Activated CD8-positive, alpha-beta T cell treated with anti-CD3 and anti-CD28 coated beads for 36 hours (primary cell): ENCODE measurements at regions of chr1 and their contacts with region 1.

Region 1: DNA sequence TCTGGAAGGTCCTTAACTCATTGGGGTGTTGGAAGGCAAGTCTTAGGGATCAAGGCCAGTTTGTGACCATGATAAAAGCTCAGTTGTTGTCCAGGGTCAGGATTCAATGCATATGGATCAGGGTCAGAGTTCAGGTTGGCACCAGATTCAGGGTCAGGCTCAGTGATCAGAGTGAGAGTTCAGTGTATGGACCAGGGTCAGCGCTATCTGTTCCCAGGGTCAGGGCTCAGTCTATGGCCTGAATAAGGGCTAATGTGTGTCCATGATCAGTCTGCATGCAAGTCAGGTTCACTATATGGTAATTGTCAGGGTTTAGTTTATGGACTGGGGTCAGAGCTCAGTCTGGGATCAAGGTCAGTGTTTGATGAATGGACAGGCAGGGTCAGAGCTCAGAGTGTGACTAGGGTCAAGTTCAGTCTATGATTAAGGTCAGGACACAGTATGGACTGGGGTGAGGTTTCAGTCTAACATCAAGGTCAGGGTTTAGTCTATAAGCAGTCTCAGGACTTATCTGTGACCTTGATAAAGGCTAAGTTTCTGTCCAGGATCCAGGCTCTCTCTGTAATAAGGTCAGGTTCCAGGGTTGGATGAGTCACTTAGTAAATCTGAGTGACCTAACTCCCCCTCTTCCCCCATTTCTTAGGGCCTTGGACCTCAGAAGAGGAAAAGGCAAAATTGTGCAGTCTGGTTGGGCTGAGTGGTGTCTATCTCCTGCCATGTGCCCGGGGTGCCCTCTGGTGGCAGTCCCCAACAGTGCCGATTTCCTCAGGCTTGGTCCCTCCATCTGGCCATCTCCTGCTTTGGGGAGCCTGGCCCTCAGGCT is 23.8 kb downstream of the KNCN start:
- DNase-seq: peak; percentile 91
- ATAC-seq: peak; percentile 61
- H3K4me3 Mint-ChIP-seq: no peak overlapping the region
- H3K27ac Mint-ChIP-seq: no peak overlapping the region
- H3K4me1 Mint-ChIP-seq: peaks cover 29% of the 10 kb centered on the region
- H3K27me3 Mint-ChIP-seq: peaks cover 37% of the 10 kb centered on the region
- CTCF ChIP-seq: peak; percentile 92

Region 2: DNA sequence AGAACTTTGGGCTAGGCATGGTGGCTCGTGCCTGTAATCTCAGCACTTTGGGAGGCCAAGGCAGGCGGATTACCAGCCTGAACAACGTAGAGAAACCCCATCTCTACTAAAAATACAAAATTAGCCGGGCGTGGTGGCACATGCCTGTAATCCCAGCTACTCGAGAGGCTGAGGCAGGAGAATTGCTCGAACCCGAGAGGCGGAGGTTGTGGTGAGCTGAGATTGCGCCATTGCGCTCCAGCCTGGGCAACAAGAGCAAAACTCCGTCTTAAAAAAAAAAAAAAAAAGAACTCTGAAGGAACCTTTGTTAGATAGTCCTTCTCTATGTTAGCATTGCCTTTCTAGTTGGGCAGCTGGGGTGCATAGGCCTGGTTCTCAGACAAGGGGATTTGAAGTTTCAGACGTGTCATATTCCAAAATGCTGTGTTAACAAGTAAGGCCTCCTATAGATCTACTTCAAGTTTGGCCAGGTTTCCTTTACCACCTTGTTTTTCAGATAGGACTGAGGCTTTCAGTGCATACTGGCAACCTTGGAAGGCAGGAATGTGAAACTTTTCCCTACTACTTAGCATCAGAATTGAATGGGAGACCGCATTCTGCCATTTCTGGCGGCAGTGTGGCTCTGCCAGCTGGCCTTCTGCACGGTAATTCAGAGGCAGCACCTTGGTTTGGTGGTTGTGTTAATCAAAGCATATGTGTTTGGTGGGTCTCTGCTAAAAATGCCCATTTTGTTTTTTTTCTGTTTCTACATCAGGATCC is 218.1 kb before region 1 on chr1:
- CTCF ChIA-PET with region 1: no interaction called
- POLR2A ChIA-PET with region 1: no interaction called
- intact Hi-C with region 1: no loop called
- DNase-seq: no peak
- ATAC-seq: no peak
- H3K4me3 Mint-ChIP-seq: no peak overlapping the region
- H3K27ac Mint-ChIP-seq: no peak overlapping the region
- H3K4me1 Mint-ChIP-seq: peaks cover 28% of the 10 kb centered on the region
- H3K27me3 Mint-ChIP-seq: no peaks in the 10 kb centered on the region
- CTCF ChIP-seq: no peak

Region 3: DNA sequence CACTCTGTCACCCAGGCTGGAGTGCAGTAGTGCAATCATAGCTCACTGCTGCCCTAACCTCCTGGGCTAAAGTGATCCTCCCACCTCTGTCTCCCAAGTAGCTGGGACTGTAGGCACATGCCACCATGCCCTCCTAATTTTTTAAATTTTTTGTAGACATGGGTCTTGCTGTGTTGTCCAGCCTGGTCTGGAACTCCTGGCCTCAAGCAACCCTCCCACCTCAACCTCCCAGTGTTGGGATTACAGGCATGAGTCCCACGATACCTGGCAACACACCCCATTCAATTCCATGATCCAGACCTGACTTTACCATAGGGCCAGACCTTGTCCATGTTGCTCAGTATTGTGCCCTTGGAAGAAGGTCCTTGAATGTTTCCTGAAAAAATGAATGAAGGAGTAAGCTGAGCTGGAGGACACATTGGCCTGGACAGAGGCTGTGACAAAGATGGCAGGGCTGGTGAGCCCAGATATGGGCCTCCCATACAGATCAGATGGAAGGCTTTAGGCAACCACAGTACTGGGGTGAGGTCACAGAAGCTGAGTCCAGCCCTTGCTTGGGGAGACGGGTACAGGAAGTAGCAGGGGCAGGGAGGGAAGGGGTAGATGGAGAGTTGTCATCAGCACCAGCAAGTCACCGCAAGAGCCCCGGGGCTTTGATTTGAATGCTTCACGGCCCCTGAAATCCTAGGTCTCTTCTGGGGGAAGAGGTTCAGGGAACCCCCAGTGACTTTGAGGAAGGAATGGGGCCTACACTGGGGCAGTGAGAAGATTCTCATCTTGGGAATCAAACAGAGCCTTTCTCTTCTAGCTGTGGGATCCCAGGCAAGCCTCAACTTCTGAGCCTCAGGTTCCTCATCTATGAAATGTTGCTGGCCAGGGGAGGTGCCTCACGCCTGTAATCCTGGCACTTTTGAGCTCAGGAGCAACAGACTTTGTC is 78.2 kb before region 1 on chr1:
- CTCF ChIA-PET with region 1: interaction called, 128 read pairs
- POLR2A ChIA-PET with region 1: interaction called, 4 read pairs
- intact Hi-C with region 1: loop called (anchors 2 kb)
- DNase-seq: peak; percentile 11
- ATAC-seq: no peak
- H3K4me3 Mint-ChIP-seq: no peak overlapping the region
- H3K27ac Mint-ChIP-seq: no peak overlapping the region
- H3K4me1 Mint-ChIP-seq: peaks cover 9% of the 10 kb centered on the region
- H3K27me3 Mint-ChIP-seq: peaks cover 47% of the 10 kb centered on the region
- CTCF ChIP-seq: no peak

Region 4: GRCh38 chr1:46489638-46490405 is 37.9 kb before region 1 on chr1 and contains the start of gene DMBX1:
- CTCF ChIA-PET with region 1: interaction called, 22 read pairs
- POLR2A ChIA-PET with region 1: no interaction called
- intact Hi-C with region 1: no loop called
- DNase-seq: peak; percentile 51
- ATAC-seq: peak; percentile 59
- H3K4me3 Mint-ChIP-seq: peak within 1 kb of the TSS; percentile 48
- H3K27ac Mint-ChIP-seq: no peak within 1 kb of the TSS
- H3K4me1 Mint-ChIP-seq: peaks cover 35% of the 10 kb centered on the region
- H3K27me3 Mint-ChIP-seq: peaks cover 83% of the 10 kb centered on the region
- CTCF ChIP-seq: no peak
- total RNA-seq, gene DMBX1: 0.09 TPM in 1 of 2 experiments, not detected in the other

Region 5: DNA sequence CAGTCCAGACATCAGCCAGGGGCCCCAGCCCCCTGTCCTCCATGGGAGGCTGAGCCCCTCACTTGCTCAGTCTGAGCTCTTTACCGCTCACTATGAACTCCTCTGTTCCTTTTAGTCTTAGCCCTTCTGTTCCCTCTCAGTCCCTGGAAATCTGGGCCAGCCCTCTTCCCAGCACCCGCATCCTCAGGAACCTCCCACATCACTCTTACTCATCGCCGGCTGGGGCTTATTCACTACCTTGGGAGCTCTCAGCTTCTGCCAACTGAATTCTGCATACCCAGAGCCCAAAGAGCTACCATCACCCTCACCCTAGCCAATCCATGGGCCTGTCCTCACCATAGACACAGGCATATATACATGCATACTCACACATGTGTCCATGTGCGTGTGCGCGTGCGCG is 12.3 kb after region 1 on chr1:
- CTCF ChIA-PET with region 1: interaction called, 14 read pairs
- POLR2A ChIA-PET with region 1: no interaction called
- intact Hi-C with region 1: no loop called
- DNase-seq: no peak
- ATAC-seq: no peak
- H3K4me3 Mint-ChIP-seq: no peak overlapping the region
- H3K27ac Mint-ChIP-seq: no peak overlapping the region
- H3K4me1 Mint-ChIP-seq: no peaks in the 10 kb centered on the region
- H3K27me3 Mint-ChIP-seq: peaks cover 28% of the 10 kb centered on the region
- CTCF ChIP-seq: no peak

Region 6: GRCh38 chr1:46681333-46682034 is 153.8 kb after region 1 on chr1:
- CTCF ChIA-PET with region 1: no interaction called
- POLR2A ChIA-PET with region 1: no interaction called
- intact Hi-C with region 1: no loop called
- DNase-seq: no peak
- ATAC-seq: no peak
- H3K4me3 Mint-ChIP-seq: no peak overlapping the region
- H3K27ac Mint-ChIP-seq: peak overlapping the region; percentile 44
- H3K4me1 Mint-ChIP-seq: peaks cover 9% of the 10 kb centered on the region
- H3K27me3 Mint-ChIP-seq: no peaks in the 10 kb centered on the region
- CTCF ChIP-seq: no peak

Region 7: DNA sequence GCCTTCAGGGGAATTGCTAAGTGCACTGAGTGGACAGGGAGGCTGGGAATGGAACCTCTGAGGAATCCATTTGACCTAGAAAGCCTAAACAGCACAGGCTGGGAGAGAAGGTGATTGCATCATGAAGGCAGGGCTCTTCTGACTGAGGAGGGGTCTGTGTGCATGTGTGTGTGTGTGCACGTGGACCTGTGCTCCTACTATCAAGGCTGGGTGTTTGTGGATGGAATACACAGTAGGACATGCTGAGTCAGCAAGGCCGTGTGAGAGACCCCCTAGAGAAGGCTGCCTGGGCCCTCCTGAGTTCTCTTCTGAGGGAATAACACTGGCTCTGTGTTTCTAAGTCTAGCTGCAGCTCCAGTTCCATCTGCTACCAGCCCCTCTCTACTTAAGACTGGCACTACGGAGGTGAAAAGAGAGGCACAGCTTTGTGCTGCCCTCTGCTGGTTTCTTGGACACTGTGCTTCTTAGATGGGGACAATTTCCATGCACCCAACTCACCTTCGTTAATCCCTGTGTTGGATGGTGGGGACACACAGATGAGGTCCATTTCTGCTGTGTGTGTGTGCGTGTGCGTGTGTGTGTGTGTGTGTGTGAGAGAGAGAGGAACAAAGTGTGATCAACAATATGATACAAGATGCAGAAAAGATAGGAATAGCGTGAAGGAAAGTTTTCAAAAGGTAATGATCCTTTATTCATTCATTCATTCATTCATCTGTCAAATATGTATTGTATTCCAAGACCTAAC is 197.5 kb after region 1 on chr1:
- CTCF ChIA-PET with region 1: interaction called, 20 read pairs
- POLR2A ChIA-PET with region 1: no interaction called
- intact Hi-C with region 1: loop called (anchors 5 kb)
- DNase-seq: peak; percentile 84
- ATAC-seq: peak; percentile 99
- H3K4me3 Mint-ChIP-seq: no peak overlapping the region
- H3K27ac Mint-ChIP-seq: no peak overlapping the region
- H3K4me1 Mint-ChIP-seq: no peaks in the 10 kb centered on the region
- H3K27me3 Mint-ChIP-seq: peaks cover 26% of the 10 kb centered on the region
- CTCF ChIP-seq: peak; percentile 62